H1 (cell line): ENCODE measurements at regions of chr7 and their contacts with region 1.

Region 1: GRCh38 chr7:13990984-13991790 is 1.7 kb upstream of the ETV1 start:
- DNase-seq: peak; percentile 96 to 97
- H3K4me3 ChIP-seq: peak overlapping the region; percentile 75 to 85 (median 78)
- H3K27ac ChIP-seq: peak overlapping the region; percentile 81
- H3K4me1 ChIP-seq: peaks cover 0 to 3% (median 2%) of the 10 kb centered on the region in 4 experiments; a peak in 4 of 7 replicates
- H3K27me3 ChIP-seq: no peaks in the 10 kb centered on the region
- CTCF ChIP-seq: no peak
- EP300 ChIP-seq: no peak; a peak in 1 of 3 replicates
- POLR2A ChIP-seq: peak; percentile 58 to 74
- RAD21 ChIP-seq: no peak

Region 2: GRCh38 chr7:13963925-13964324 is 27.3 kb before region 1 on chr7:
- CTCF ChIA-PET with region 1: interaction called, 6 read pairs
- POLR2A ChIA-PET with region 1: interaction called, 12 read pairs
- DNase-seq: no peak
- H3K4me3 ChIP-seq: no peak overlapping the region
- H3K27ac ChIP-seq: 0 out of 2 replicates have a peak overlapping the region, but pooled peaks have one; percentile 36
- H3K4me1 ChIP-seq: peaks cover 0 to 8% (median 2%) of the 10 kb centered on the region in 4 experiments; a peak in 3 of 7 replicates
- H3K27me3 ChIP-seq: no peaks in the 10 kb centered on the region
- CTCF ChIP-seq: no peak
- EP300 ChIP-seq: no peak
- POLR2A ChIP-seq: no peak
- RAD21 ChIP-seq: no peak

Region 3: DNA sequence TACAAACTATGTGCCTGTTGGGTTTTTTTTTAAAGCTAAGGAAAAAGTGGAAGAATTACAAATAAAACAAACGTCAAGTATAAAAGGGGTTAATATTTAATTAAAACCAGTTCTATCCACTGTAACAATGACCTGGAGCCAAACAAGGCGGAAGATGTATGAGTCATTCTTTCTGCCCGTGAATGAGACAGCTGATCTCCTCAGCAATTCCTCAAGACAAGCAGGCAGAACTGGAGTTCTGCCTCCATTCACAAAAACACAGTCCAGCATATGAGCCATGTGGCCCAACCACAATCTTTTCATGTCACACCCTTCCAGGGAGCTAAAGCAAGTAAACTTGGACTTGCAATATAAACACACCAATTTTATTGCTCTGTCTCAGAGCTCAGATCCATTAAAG is 10.1 kb before region 1 on chr7:
- CTCF ChIA-PET with region 1: interaction called, 9 read pairs
- POLR2A ChIA-PET with region 1: interaction called, 48 read pairs
- DNase-seq: no peak
- H3K4me3 ChIP-seq: no peak overlapping the region; a peak in 2 of 8 replicates
- H3K27ac ChIP-seq: no peak overlapping the region
- H3K4me1 ChIP-seq: peaks cover 0 to 17% (median 3%) of the 10 kb centered on the region in 4 experiments; a peak in 3 of 7 replicates
- H3K27me3 ChIP-seq: no peaks in the 10 kb centered on the region
- CTCF ChIP-seq: no peak
- EP300 ChIP-seq: no peak
- POLR2A ChIP-seq: no peak
- RAD21 ChIP-seq: no peak

Region 4: DNA sequence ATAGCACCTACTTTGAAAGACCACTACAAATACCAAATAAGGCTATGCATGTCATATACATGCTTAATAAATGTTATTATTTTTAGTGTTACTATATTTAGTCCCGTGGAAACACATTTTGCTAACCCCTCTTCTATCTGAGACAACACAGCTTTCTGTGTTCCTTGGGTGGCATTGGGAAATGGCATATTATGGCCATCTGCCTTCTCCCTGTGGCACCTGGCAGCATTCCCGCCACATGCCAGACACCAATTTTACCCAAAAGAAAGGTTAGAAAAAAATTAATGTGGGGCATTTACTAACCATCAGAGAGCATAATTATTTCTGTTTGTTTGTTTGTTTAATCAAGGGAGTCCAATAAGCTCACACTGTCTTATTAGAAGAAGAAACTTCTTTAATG is 166.9 kb after region 1 on chr7:
- CTCF ChIA-PET with region 1: no interaction called
- POLR2A ChIA-PET with region 1: no interaction called
- DNase-seq: no peak
- H3K4me3 ChIP-seq: no peak overlapping the region
- H3K27ac ChIP-seq: no peak overlapping the region
- H3K4me1 ChIP-seq: no peaks in the 10 kb centered on the region
- H3K27me3 ChIP-seq: no peaks in the 10 kb centered on the region
- CTCF ChIP-seq: no peak
- EP300 ChIP-seq: no peak
- POLR2A ChIP-seq: no peak
- RAD21 ChIP-seq: no peak